B cell (primary cell): ENCODE measurements at regions of chr7 and their contacts with region 1.

Region 1: DNA sequence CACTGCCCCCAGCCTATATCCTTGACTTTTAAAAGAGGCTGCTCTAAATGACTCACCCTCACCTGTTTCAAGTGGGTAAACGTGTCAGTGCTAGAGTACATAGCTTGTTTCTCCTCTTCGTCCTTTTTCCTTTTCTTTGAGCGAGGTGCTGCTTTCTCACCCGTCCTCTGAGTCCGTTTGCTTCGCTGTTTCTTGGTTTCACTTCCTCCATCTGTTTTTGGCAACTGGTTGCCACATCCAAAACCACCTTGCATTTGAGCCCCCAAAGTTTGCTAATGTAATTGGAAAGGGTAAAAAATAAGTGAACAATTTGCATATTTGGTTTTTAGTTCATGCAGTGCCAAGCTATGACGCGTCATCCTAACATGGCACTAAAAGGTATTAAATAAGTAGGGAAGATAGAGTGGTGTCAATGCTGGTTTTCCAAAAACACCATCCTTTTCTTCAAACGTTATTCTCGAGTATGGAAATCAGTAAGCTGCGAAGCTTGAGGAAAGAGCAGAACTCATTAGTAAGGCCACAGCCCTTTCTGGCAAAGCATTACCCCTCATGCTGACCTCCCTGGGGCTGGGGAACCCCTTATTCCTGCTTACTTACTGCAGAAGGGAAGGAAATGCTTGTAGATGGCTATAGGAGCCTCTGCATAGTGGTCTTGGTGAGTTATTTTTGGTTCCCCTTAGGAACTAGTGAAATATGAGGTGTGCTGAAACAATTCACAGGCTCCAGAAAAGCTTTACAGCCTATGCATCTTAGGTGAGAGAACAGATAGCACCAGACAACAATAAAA is 133.5 kb downstream of the GALNT11 start:
- DNase-seq: peak; percentile 86
- ATAC-seq: peak; percentile 90
- H3K4me3 ChIP-seq: peak overlapping the region in 3 of 5 experiments; percentile 18 to 48 (median 36)
- H3K4me3 Mint-ChIP-seq: peak overlapping the region; percentile 67
- H3K27ac ChIP-seq: peak overlapping the region; percentile 86 to 87
- H3K27ac Mint-ChIP-seq: peak overlapping the region; percentile 89
- H3K4me1 ChIP-seq: peaks cover 29 to 31% of the 10 kb centered on the region in 2 donors
- H3K4me1 Mint-ChIP-seq: peaks cover 40% of the 10 kb centered on the region
- H3K27me3 ChIP-seq: no peaks in the 10 kb centered on the region
- H3K27me3 Mint-ChIP-seq: no peaks in the 10 kb centered on the region
- CTCF ChIP-seq: no peak

Region 2: GRCh38 chr7:152176797-152177196 is 17.8 kb after region 1 on chr7:
- CTCF ChIA-PET with region 1: interaction called, 3 read pairs
- POLR2A ChIA-PET with region 1: interaction called, 3 read pairs
- intact Hi-C with region 1: loop called (anchors 2 kb)
- DNase-seq: peak; percentile 61
- ATAC-seq: peak; percentile 60
- H3K4me3 ChIP-seq: no peak overlapping the region
- H3K4me3 Mint-ChIP-seq: peak overlapping the region; percentile 64
- H3K27ac ChIP-seq: peak overlapping the region in 1 of 2 donors; percentile 57
- H3K27ac Mint-ChIP-seq: peak overlapping the region; percentile 91
- H3K4me1 ChIP-seq: peaks cover 12% of the 10 kb centered on the region in 2 donors
- H3K4me1 Mint-ChIP-seq: peaks cover 14% of the 10 kb centered on the region
- H3K27me3 ChIP-seq: no peaks in the 10 kb centered on the region
- H3K27me3 Mint-ChIP-seq: no peaks in the 10 kb centered on the region
- CTCF ChIP-seq: no peak

Region 3: DNA sequence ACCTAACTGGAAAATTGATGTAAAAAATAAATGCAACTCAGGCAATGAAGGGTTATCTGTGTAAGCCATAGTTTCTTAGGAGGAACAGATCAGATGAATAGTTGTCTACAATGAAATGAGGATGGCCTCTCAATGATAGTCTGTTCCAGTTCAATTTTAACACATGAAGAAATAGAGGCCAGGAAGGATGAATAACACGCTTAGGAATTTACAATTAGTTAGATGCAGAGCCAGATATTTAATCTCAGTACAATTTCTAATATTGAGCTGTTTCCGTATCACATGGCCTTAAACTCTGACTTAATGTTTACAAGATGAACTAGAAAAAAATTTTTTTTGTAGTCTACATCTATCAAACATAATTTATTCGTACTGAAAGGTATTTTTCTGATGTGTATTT is 43.1 kb after region 1 on chr7:
- CTCF ChIA-PET with region 1: no interaction called
- POLR2A ChIA-PET with region 1: no interaction called
- intact Hi-C with region 1: no loop called
- DNase-seq: no peak
- ATAC-seq: no peak
- H3K4me3 ChIP-seq: no peak overlapping the region
- H3K4me3 Mint-ChIP-seq: no peak overlapping the region
- H3K27ac ChIP-seq: no peak overlapping the region
- H3K27ac Mint-ChIP-seq: no peak overlapping the region
- H3K4me1 ChIP-seq: no peaks in the 10 kb centered on the region
- H3K4me1 Mint-ChIP-seq: no peaks in the 10 kb centered on the region
- H3K27me3 ChIP-seq: no peaks in the 10 kb centered on the region
- H3K27me3 Mint-ChIP-seq: no peaks in the 10 kb centered on the region
- CTCF ChIP-seq: no peak

Region 4: GRCh38 chr7:152704796-152705384 is 545.9 kb after region 1 on chr7:
- CTCF ChIA-PET with region 1: interaction called, 8 read pairs
- POLR2A ChIA-PET with region 1: no interaction called
- intact Hi-C with region 1: loop called (anchors 2 kb)
- DNase-seq: no peak
- ATAC-seq: no peak
- H3K4me3 ChIP-seq: no peak overlapping the region
- H3K4me3 Mint-ChIP-seq: no peak overlapping the region
- H3K27ac ChIP-seq: no peak overlapping the region
- H3K27ac Mint-ChIP-seq: no peak overlapping the region
- H3K4me1 ChIP-seq: no peaks in the 10 kb centered on the region
- H3K4me1 Mint-ChIP-seq: no peaks in the 10 kb centered on the region
- H3K27me3 ChIP-seq: no peaks in the 10 kb centered on the region
- H3K27me3 Mint-ChIP-seq: peaks cover 4% of the 10 kb centered on the region
- CTCF ChIP-seq: no peak